ENCODE measurements at regions of chr18 and their contacts with region 1.

Region 1: DNA sequence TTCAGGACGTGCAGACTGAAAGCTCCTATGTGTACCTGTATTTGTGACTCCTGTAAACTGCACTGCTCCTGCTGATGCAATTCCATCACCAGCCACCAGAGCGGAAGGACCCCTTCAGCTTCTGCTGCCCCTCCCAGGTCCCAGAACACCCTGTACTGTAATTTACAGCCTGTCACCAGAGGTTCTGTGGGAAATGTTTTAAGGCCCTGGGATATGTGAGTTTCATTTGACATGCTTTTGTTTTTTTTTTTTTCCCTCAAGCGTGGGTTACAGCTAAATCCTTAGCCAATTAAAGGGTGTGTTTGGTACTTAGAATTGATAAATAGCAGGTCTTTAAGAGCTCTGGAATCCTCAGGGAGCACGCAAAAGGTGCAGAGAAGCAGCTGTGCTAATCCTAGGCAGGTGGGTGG is 79.4 kb downstream of the KCTD1 start:
- DNase-seq: peak; percentile 77
- ATAC-seq: peak; percentile 97
- H3K4me3 Mint-ChIP-seq: no peak overlapping the region
- H3K27ac Mint-ChIP-seq: no peak overlapping the region
- H3K4me1 Mint-ChIP-seq: peaks cover 20% of the 10 kb centered on the region
- H3K27me3 Mint-ChIP-seq: no peaks in the 10 kb centered on the region
- CTCF ChIP-seq: peak; percentile 81

Region 2: DNA sequence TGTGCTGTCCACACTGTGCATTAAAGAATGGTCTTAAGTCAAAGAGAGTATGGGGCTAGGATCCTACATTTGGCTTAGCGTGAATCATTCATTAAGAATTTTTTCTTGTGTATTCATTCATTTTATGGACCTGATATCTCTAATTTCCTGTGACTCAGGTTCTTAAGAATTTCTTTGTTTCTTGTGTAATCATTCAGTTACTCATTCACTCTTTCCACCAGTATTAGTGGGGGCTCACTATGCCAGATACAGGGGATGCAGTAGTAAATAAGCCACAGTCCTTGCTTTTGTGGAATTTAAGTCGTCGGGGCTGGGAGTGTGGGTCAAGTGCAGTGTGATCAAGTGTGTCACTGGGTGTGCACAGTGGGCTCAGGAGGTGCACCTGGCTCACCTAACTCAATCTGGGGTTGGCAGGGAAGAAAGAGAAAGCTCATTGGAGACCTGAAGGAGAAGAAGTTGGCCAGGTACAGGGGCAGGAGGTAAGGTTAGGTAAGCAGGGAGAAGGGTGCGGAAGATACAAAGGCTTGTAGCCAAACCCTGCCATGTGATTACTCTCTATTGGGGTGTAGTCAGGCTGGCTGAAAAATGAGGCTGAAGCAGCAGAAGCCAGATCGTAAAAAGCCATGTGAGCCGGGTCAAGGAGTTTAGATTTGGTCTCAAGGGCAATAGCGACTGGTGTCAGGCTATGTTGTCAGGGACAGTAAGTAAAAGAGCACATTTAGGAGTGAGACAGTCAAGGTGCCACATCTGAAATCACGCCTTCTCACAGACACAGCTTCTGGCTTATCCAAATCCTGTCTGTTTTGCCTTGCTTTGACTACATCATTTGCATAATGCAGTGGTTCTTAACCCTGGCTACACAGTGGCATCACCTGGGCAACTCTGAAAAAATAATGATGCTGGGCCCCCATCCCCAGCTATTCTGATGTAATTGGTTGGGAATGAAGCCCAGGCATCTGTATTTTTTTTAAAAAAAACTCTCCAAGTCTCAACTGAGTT is 12.3 kb after region 1 on chr18:
- CTCF ChIA-PET with region 1: interaction called, 28 read pairs
- POLR2A ChIA-PET with region 1: no interaction called
- DNase-seq: no peak
- ATAC-seq: no peak
- H3K4me3 Mint-ChIP-seq: no peak overlapping the region
- H3K27ac Mint-ChIP-seq: no peak overlapping the region; the same call in 1 of the 2 replicates
- H3K4me1 Mint-ChIP-seq: peaks cover 72% of the 10 kb centered on the region
- H3K27me3 Mint-ChIP-seq: no peaks in the 10 kb centered on the region
- CTCF ChIP-seq: no peak

Measured in WTC11 (cell line).